Sigmoid colon (tissue), 7 donors: ENCODE measurements at regions of chr12 and their contacts with region 1.

Region 1: GRCh38 chr12:95815635-95816212 is 25.2 kb upstream of the NTN4 start:
- DNase-seq: no peak
- H3K4me3 ChIP-seq: no peak overlapping the region
- H3K27ac ChIP-seq: no peak overlapping the region
- H3K4me1 ChIP-seq: peaks cover 0 to 4% (median 0%) of the 10 kb centered on the region in 4 donors
- H3K27me3 ChIP-seq: no peaks in the 10 kb centered on the region
- CTCF ChIP-seq: peak; percentile 29 to 72 (median 52)
- EP300 ChIP-seq: no peak
- POLR2A ChIP-seq: no peak

Region 2: DNA sequence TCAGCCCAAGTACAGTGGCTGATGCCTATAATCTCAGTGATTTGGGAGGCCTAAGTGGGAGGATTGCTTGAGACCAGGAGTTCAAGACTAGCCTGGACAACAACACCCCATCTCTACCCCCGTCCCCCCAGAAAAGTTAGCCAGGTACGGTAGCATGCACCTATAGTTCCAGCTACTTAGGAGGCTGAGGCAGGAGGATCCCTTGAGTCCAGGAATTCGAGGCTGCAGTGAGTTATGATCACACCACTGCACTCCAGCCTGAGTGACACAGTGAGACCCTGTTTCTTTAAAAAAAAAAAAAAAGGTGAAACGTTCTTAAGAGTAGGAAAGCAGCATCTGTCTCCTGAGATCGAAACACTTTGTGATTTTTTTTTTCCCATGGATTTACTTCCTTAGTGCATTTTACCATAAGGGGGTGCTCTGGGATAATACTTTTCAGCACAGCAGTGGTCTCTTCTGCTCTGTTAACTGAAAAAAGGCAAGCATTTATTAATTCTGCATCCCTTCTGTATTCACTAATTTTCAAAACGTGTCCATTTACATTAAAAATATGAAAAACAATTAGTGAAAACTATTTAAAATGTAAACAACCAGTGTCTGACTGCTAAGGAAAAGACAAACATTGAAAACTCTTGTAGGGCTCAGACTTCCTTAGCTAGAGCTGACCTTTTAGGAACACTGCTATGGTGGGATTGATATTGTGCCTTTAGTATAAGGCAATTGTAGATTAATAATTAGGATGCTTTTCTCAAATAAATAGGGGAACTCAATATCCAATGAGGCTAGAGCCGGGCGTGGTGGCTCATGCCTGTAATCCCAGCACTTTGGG is 233.3 kb before region 1 on chr12:
- intact Hi-C with region 1: loop called (anchors 1 kb)
- DNase-seq: no peak
- H3K4me3 ChIP-seq: no peak overlapping the region
- H3K27ac ChIP-seq: no peak overlapping the region
- H3K4me1 ChIP-seq: peaks cover 0 to 5% (median 2%) of the 10 kb centered on the region in 4 donors
- H3K27me3 ChIP-seq: no peaks in the 10 kb centered on the region
- CTCF ChIP-seq: peak in 2 of 4 experiments; percentile 18 to 39
- EP300 ChIP-seq: no peak
- POLR2A ChIP-seq: no peak

Region 3: DNA sequence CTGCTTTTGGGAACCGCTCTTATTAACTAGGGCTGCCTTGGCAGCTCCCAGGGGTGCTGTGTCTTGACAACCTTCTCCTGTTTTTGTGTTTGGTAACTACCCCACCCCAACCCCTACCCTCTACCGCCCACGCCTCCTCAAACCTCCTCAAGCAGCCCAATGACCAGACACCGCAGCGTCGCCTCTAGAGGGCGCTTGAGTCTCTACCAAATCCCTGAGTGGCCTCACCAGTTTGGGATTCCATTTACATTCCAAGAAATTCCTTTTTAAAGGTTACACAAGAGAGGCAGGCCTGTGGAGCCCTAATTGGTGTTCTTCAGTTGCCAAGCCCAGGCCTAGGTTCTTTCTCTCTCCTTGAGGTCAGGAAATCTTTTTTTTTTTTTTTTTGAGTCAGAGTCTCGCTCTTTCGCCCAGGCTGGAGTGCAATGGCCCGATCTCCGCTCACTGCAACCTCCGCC is 192.1 kb before region 1 on chr12:
- intact Hi-C with region 1: loop called (anchors 10 kb)
- DNase-seq: no peak
- H3K4me3 ChIP-seq: no peak overlapping the region
- H3K27ac ChIP-seq: peak overlapping the region in 3 of 4 donors; percentile 20 to 85 (median 39)
- H3K4me1 ChIP-seq: peaks cover 0 to 18% (median 16%) of the 10 kb centered on the region in 4 donors
- H3K27me3 ChIP-seq: no peaks in the 10 kb centered on the region
- CTCF ChIP-seq: peak in 3 of 4 experiments; percentile 36 to 43 (median 43)
- EP300 ChIP-seq: no peak
- POLR2A ChIP-seq: no peak